Right ventricle myocardium superior (tissue), 1 donor: ENCODE measurements at regions of chr6 and their contacts with region 1.

Region 1: GRCh38 chr6:166097915-166098522 is 69.6 kb downstream of the TBXT start:
- DNase-seq: peak; percentile 85
- ATAC-seq: peak; percentile 99

Region 2: GRCh38 chr6:165884813-165885765 is 212.9 kb before region 1 on chr6:
- intact Hi-C with region 1: loop called (anchors 2 kb)
- DNase-seq: peak; percentile 91
- ATAC-seq: peak; percentile 94